ENCODE measurements at regions of chr7 and their contacts with region 1.

Region 1: DNA sequence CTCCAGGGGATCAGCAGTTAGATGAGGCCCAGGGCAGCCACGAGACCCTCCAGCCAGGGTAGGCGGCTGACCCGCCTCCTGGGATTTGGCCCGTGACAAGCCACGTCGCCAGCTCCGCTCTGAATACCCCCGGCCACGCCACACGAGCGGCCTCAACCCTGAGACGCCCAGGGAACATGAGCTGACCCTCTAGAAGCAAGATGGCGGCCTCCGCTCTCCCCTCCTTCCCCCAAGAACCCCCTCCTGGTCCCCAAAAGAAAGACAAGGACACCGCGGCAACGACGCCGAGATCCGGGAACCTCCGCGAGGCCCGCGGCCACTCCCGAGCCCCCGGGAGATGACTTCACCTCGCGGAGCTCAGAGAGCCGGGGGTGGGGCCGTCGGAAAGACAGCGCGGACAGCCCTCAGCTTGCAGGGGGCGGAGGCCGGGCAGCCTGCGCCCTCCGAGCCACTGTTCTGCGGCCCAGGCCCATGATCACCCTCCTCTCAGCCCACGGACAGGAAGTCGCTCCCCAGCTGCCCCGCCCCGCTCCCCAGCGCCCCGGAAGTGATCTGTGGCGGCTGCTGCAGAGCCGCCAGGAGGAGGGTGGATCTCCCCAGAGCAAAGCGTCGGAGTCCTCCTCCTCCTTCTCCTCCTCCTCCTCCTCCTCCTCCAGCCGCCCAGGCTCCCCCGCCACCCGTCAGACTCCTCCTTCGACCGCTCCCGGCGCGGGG is at the start of gene RALA:
- DNase-seq: peak; percentile 93 to 97
- ATAC-seq: peak; percentile 99
- H3K4me3 ChIP-seq: peak within 1 kb of the TSS; percentile 94
- H3K27ac ChIP-seq: peak within 1 kb of the TSS; percentile 92
- H3K4me1 ChIP-seq: peaks cover 37% of the 10 kb centered on the region
- H3K27me3 ChIP-seq: no peaks in the 10 kb centered on the region
- CTCF ChIP-seq: no peak
- total RNA-seq, gene RALA: 15.7 to 19.3 (median 17.7) TPM

Region 2: DNA sequence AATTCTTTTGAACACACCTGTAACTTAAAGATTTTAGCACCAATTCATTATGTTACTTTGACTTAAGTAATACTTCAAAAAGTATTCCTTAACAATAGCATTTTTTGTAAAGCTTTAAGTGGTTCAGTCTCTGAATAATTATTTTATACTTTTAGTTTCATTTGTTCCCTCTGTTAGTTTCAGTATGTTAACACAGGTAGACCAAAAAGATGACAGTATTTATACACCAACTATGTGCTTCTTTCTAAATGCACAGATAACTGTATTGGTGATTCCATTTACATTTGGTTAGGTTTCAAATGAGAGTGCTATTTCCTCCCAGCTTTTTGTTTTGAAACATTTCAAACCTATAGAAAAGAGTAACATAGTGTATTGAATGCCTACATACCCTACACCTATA is 14.2 kb after region 1 on chr7:
- intact Hi-C with region 1: no loop called
- DNase-seq: no peak
- ATAC-seq: no peak
- H3K4me3 ChIP-seq: no peak overlapping the region
- H3K27ac ChIP-seq: no peak overlapping the region
- H3K4me1 ChIP-seq: peaks cover 29% of the 10 kb centered on the region
- H3K27me3 ChIP-seq: no peaks in the 10 kb centered on the region
- CTCF ChIP-seq: no peak

Region 3: DNA sequence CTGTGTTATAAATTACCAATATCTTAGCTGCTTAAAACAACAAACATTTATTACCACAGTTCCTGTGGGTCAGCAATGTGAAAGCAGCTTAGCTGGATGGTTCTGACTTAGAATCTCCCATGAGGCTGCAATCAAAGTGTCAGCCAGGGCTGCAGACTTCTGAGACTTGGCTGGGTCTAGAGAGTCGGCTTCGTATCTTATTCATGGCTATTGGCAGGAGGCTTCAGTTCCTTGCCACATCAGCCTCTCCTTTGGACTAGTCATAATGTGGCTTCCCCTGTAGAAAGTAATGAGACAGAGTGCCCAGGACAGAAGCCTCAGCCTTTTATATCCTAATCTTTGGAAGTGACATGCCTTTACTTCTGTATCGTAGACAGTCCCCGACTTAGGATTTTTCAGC is 27.5 kb after region 1 on chr7:
- intact Hi-C with region 1: loop called in 1 of 2 experiments (anchors 1 kb)
- DNase-seq: peak; percentile 52 to 82
- ATAC-seq: peak; percentile 96 to 99 (median 98)
- H3K4me3 ChIP-seq: peak overlapping the region; percentile 9
- H3K27ac ChIP-seq: peak overlapping the region; percentile 66
- H3K4me1 ChIP-seq: peaks cover 31% of the 10 kb centered on the region
- H3K27me3 ChIP-seq: no peaks in the 10 kb centered on the region
- CTCF ChIP-seq: no peak

Region 4: GRCh38 chr7:39691821-39692220 is 68.6 kb after region 1 on chr7:
- intact Hi-C with region 1: loop called (anchors 10 kb)
- DNase-seq: no peak
- ATAC-seq: no peak
- H3K4me3 ChIP-seq: no peak overlapping the region
- H3K27ac ChIP-seq: no peak overlapping the region
- H3K4me1 ChIP-seq: no peaks in the 10 kb centered on the region
- H3K27me3 ChIP-seq: no peaks in the 10 kb centered on the region
- CTCF ChIP-seq: no peak

Region 5: DNA sequence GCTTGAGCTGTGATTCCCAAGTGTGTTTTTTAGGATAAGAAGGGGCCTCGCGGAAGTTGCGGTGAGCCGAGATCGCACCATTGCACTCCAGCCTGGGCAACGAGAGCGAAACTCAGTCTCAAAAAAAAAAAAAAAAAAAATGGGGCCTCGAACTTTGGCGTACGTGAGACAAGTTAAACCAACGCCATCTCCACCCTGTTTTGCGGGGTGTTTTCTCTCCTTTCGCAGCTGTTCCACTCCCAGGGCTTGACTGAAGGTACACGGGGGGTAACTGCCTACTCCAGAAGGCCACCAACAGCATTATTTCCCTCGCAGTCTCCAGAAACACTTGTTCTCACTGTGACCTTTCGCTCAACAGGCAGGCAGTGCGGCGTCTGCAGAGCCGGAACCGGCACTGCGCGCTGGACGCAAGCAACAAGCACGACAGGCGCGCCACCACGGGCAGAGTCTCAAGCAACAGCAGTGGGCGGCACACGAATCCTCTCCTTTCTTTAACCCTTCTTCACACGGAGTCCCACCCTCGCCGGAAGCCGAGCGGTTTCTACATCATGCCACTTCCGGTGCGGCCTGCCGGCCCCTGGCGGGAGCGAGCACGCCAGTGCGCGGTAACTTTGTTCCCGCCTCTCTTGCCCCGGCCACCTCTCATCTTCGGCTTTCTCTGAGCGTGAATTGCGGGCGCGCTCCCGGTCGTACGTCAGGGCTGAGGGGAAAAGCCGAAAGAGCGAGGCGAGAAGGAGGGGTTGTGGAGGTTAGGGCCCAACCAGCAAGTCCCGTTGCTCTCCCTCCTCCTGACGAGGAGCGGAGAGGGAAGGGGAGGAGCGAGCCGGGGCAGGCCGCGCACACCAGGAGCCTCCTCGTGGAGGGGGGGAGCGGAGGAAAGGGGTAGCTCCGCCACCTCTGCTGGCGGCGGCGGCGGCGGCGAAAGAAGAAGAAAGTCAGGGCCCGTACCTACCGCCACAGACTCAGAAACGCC is 326.1 kb after region 1 on chr7:
- intact Hi-C with region 1: loop called in 1 of 2 experiments (anchors 10 kb)
- DNase-seq: peak; percentile 99 to 100
- ATAC-seq: peak; percentile 87 to 93 (median 90)
- H3K4me3 ChIP-seq: peak overlapping the region; percentile 95
- H3K27ac ChIP-seq: peak overlapping the region; percentile 96
- H3K4me1 ChIP-seq: peaks cover 21% of the 10 kb centered on the region
- H3K27me3 ChIP-seq: no peaks in the 10 kb centered on the region
- CTCF ChIP-seq: no peak

Region 6: GRCh38 chr7:40134428-40135316 is 511.5 kb after region 1 on chr7 and contains the starts of genes MPLKIP and SUGCT:
- intact Hi-C with region 1: loop called in 1 of 2 experiments (anchors 5 kb)
- DNase-seq: peak; percentile 82 to 91
- ATAC-seq: peak; percentile 95 to 97 (median 96)
- H3K4me3 ChIP-seq: peak within 1 kb of the TSS; percentile 99
- H3K27ac ChIP-seq: peak within 1 kb of the TSS; percentile 97
- H3K4me1 ChIP-seq: peaks cover 32% of the 10 kb centered on the region
- H3K27me3 ChIP-seq: no peaks in the 10 kb centered on the region
- CTCF ChIP-seq: peak; percentile 96
- total RNA-seq, gene MPLKIP: 17.3 to 19.0 (median 18.9) TPM
- total RNA-seq, gene SUGCT: 3.2 to 7.3 (median 5.0) TPM

Measured in psoas muscle (tissue), 8 donors.